Right cardiac atrium (tissue), 5 donors: ENCODE measurements at regions of chr6 and their contacts with region 1.

Region 1: GRCh38 chr6:85642774-85643536 is at the start of gene SYNCRIP:
- DNase-seq: peak; percentile 100
- ATAC-seq: peak; percentile 93 to 95
- H3K4me3 ChIP-seq: peak within 1 kb of the TSS; percentile 82
- H3K27ac ChIP-seq: peak within 1 kb of the TSS; percentile 100
- H3K4me1 ChIP-seq: no peaks in the 10 kb centered on the region
- H3K27me3 ChIP-seq: no peaks in the 10 kb centered on the region
- total RNA-seq, gene SYNCRIP: 60.8 to 89.5 (median 65.7) TPM

Region 2: GRCh38 chr6:85404502-85405174 is 238.3 kb before region 1 on chr6:
- intact Hi-C with region 1: no loop called
- DNase-seq: peak in 2 of 3 donors; percentile 25 to 53
- ATAC-seq: peak; percentile 48 to 61
- H3K4me3 ChIP-seq: no peak overlapping the region
- H3K27ac ChIP-seq: no peak overlapping the region
- H3K4me1 ChIP-seq: no peaks in the 10 kb centered on the region
- H3K27me3 ChIP-seq: no peaks in the 10 kb centered on the region

Region 3: DNA sequence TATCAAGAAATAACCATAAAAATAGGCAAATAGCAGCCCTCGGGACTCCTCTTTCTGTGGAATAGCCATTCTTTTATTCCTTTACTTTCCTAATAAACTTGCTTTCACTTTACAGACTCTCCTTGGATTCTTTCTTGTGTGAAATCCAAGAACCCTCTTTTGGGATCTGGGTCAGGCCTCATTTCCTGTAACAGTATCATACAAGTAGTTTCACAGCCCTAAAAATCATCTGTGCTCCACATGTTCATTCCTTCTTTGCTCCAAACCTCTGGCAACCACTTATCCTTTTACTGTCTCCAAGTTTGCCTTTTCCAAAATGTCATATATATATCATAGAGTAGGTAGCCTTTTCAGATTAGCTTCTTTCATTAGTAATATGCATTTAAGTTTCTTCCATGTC is 206.5 kb before region 1 on chr6:
- intact Hi-C with region 1: no loop called
- DNase-seq: no peak
- ATAC-seq: peak; percentile 59 to 80
- H3K4me3 ChIP-seq: no peak overlapping the region
- H3K27ac ChIP-seq: no peak overlapping the region
- H3K4me1 ChIP-seq: no peaks in the 10 kb centered on the region
- H3K27me3 ChIP-seq: no peaks in the 10 kb centered on the region

Region 4: GRCh38 chr6:85593438-85594196 is 49.3 kb before region 1 on chr6 and contains the start of gene SNX14:
- intact Hi-C with region 1: loop called in 1 of 4 experiments (anchors 5 kb)
- DNase-seq: peak; percentile 98 to 99 (median 98)
- ATAC-seq: peak; percentile 99
- H3K4me3 ChIP-seq: peak within 1 kb of the TSS; percentile 64
- H3K27ac ChIP-seq: peak within 1 kb of the TSS; percentile 92
- H3K4me1 ChIP-seq: peaks cover 3% of the 10 kb centered on the region
- H3K27me3 ChIP-seq: no peaks in the 10 kb centered on the region
- total RNA-seq, gene SNX14: 35.5 to 42.2 (median 39.9) TPM

Region 5: DNA sequence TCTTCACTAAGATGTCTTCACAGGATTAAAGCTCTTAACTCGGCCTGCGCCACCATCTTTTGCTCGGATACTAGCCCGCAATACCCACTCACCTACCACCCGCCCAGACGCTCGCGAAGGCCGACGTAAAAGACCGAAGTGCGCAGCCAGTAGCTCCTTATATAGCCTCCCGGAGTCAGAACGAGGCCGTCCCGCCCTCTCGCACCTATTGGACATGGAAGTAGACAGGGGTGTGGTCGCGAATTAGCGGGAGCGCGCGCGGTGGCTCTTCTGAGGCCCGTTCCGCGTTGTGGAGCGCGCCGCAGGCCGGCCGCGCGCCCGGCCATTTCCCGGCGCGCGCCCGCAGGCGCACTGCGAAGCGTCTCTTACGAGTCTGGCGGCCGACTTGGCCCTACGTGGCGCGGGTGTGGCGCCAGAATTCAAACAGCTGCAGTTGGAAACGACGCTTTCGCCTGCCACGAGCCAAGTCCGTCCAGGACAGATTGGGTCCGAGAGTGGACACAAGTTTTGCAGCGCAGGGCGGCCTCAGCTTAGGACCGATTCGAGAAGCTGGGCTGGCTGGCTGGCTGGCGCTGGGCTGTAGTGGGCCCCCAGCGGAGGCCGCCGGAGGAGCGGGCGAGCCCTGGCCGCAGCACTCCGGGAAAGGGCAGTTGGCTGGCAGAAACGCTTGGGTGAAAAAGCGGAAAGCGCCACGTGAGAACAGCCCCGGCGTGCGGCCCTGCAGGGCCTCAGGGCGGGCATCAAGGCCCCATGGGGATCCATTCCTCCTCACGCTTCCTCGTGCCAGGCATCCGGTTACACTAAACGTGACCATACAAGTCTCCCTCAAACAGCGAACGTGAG is 35.9 kb after region 1 on chr6:
- intact Hi-C with region 1: loop called in 3 of 4 experiments (anchors 1 to 5 kb)
- DNase-seq: peak; percentile 98 to 99 (median 99)
- ATAC-seq: peak; percentile 99
- H3K4me3 ChIP-seq: peak overlapping the region; percentile 90
- H3K27ac ChIP-seq: peak overlapping the region; percentile 97
- H3K4me1 ChIP-seq: no peaks in the 10 kb centered on the region
- H3K27me3 ChIP-seq: no peaks in the 10 kb centered on the region

Region 6: GRCh38 chr6:85714893-85715530 is 72.1 kb after region 1 on chr6:
- intact Hi-C with region 1: no loop called
- DNase-seq: no peak
- ATAC-seq: no peak
- H3K4me3 ChIP-seq: no peak overlapping the region
- H3K27ac ChIP-seq: no peak overlapping the region
- H3K4me1 ChIP-seq: no peaks in the 10 kb centered on the region
- H3K27me3 ChIP-seq: no peaks in the 10 kb centered on the region

Region 7: GRCh38 chr6:86079938-86080337 is 437.0 kb after region 1 on chr6:
- intact Hi-C with region 1: no loop called
- DNase-seq: no peak
- ATAC-seq: no peak
- H3K4me3 ChIP-seq: no peak overlapping the region
- H3K27ac ChIP-seq: no peak overlapping the region
- H3K4me1 ChIP-seq: no peaks in the 10 kb centered on the region
- H3K27me3 ChIP-seq: no peaks in the 10 kb centered on the region